H1 (cell line): ENCODE measurements at regions of chr13 and their contacts with region 1.

Region 1: DNA sequence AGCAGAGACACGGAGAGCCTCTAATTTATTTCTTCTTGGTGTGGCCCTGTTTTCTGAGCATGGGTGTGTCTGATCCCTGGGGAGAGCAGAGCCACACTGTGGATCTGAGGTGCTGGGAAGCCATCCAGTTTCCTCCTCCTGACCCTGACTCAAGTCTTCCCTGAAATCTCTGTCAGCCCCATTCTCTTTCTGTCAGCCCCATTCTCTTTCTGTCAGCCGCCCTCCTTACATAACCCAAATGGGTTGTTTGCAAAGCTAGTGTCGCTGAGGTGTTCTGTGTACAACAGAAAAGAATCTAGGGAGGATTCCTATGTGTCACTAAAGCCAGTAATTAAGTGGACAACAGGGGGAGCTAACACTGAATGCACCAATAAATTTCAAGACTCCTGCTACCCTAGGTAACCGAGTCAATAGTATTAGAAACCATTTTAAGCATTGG is 50.2 kb downstream of the LRCH1 start:
- DNase-seq: no peak
- H3K4me3 ChIP-seq: no peak overlapping the region
- H3K27ac ChIP-seq: no peak overlapping the region
- H3K4me1 ChIP-seq: peaks cover 0 to 3% (median 0%) of the 10 kb centered on the region in 4 experiments; a peak in 1 of 7 replicates
- H3K27me3 ChIP-seq: no peaks in the 10 kb centered on the region
- CTCF ChIP-seq: peak in 2 of 3 experiments; percentile 25 to 45; a peak in 2 of 4 replicates
- EP300 ChIP-seq: no peak
- POLR2A ChIP-seq: no peak
- RAD21 ChIP-seq: peak; percentile 52

Region 2: DNA sequence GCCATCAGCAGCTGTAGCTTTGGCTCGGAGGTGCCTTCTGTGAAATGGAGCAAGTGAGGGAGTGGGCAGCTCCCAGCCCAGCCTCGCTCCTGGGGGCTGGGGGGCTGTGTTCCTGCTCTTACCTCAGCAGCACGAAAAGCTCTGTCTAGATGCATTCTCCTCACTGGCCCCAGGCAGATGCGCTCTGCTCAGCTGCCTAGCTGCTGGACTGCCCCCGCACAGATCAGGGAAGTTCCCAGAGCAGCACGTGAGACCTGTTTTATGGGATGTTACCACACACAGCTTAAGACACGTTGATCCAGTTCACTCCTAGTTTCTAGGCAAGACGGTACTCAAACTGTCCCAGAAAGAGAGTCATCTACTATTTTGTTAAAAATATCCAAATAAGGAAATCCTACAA is 434.8 kb before region 1 on chr13:
- CTCF ChIA-PET with region 1: no interaction called
- POLR2A ChIA-PET with region 1: no interaction called
- DNase-seq: no peak
- H3K4me3 ChIP-seq: no peak overlapping the region
- H3K27ac ChIP-seq: no peak overlapping the region
- H3K4me1 ChIP-seq: peaks cover 0 to 6% (median 2%) of the 10 kb centered on the region in 4 experiments; a peak in 2 of 7 replicates
- H3K27me3 ChIP-seq: peaks cover 0 to 4% (median 0%) of the 10 kb centered on the region in 4 experiments; a peak in 1 of 7 replicates
- CTCF ChIP-seq: no peak
- EP300 ChIP-seq: no peak
- POLR2A ChIP-seq: no peak
- RAD21 ChIP-seq: no peak

Region 3: GRCh38 chr13:46586766-46587514 is 16.2 kb before region 1 on chr13:
- CTCF ChIA-PET with region 1: interaction called, 13 read pairs
- POLR2A ChIA-PET with region 1: no interaction called
- DNase-seq: no peak
- H3K4me3 ChIP-seq: no peak overlapping the region
- H3K27ac ChIP-seq: no peak overlapping the region
- H3K4me1 ChIP-seq: no peaks in the 10 kb centered on the region; a peak in 2 of 7 replicates
- H3K27me3 ChIP-seq: no peaks in the 10 kb centered on the region
- CTCF ChIP-seq: no peak
- EP300 ChIP-seq: no peak
- POLR2A ChIP-seq: no peak
- RAD21 ChIP-seq: no peak

Region 4: DNA sequence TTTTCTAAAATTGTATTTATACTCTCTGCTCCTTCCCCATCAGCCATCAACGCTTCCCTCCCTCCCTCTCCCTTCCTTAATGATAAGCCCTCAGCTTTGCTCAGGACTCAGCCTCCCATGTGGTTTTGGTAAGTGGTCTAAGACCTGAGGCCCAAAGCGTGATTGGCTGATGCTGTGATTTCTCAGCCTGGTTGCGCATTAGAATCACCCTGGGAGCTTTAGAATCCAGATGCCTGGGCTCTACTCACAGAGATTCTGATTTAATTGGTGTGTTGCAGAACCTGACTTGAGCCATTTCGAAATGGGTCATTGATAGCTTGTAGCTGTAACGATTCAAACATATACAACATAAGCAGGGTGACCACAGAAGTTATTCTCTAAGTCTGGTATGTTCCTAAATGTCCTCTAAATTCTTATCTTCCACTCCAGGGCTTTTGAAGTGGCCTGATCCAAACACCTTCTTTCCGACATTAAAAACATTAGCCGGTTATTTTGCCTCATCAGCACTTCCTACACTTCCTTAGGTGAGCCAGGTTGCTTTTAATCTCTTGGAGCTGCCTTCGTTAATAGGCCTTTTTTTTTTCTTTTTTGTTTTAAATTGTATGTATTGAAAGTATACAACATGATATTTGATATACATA is 10.3 kb after region 1 on chr13:
- CTCF ChIA-PET with region 1: interaction called, 19 read pairs
- POLR2A ChIA-PET with region 1: no interaction called
- DNase-seq: no peak
- H3K4me3 ChIP-seq: no peak overlapping the region
- H3K27ac ChIP-seq: no peak overlapping the region
- H3K4me1 ChIP-seq: peaks cover 0 to 10% (median 0%) of the 10 kb centered on the region in 4 experiments; a peak in 2 of 7 replicates
- H3K27me3 ChIP-seq: no peaks in the 10 kb centered on the region
- CTCF ChIP-seq: no peak
- EP300 ChIP-seq: no peak
- POLR2A ChIP-seq: no peak
- RAD21 ChIP-seq: no peak

Region 5: GRCh38 chr13:46622630-46623256 is 19.6 kb after region 1 on chr13:
- CTCF ChIA-PET with region 1: interaction called, 27 read pairs
- POLR2A ChIA-PET with region 1: no interaction called
- DNase-seq: no peak
- H3K4me3 ChIP-seq: no peak overlapping the region
- H3K27ac ChIP-seq: no peak overlapping the region
- H3K4me1 ChIP-seq: peaks cover 5 to 19% (median 10%) of the 10 kb centered on the region in 4 experiments
- H3K27me3 ChIP-seq: no peaks in the 10 kb centered on the region
- CTCF ChIP-seq: no peak
- EP300 ChIP-seq: no peak
- POLR2A ChIP-seq: no peak
- RAD21 ChIP-seq: no peak